ENCODE measurements at regions of chr4 and their contacts with region 1.

Region 1: GRCh38 chr4:41196633-41197332 is 17.6 kb downstream of the APBB2 start:
- DNase-seq: no peak
- ATAC-seq: no peak
- H3K4me3 ChIP-seq: no peak overlapping the region
- H3K27ac ChIP-seq: no peak overlapping the region
- H3K4me1 ChIP-seq: peaks cover 0 to 74% (median 12%) of the 10 kb centered on the region in 12 donors
- H3K27me3 ChIP-seq: no peaks in the 10 kb centered on the region
- CTCF ChIP-seq: no peak
- POLR2A ChIP-seq: no peak

Region 2: GRCh38 chr4:41143311-41144039 is 53.3 kb before region 1 on chr4:
- intact Hi-C with region 1: loop called in 2 of 10 experiments (anchors 5 to 10 kb)
- DNase-seq: peak in 4 of 5 donors; percentile 40 to 63 (median 56)
- ATAC-seq: peak; percentile 62 to 87 (median 82)
- H3K4me3 ChIP-seq: peak overlapping the region in 4 of 12 donors; percentile 8 to 32 (median 24)
- H3K27ac ChIP-seq: peak overlapping the region; percentile 56 to 89 (median 72)
- H3K4me1 ChIP-seq: peaks cover 0 to 65% (median 36%) of the 10 kb centered on the region in 12 donors
- H3K27me3 ChIP-seq: no peaks in the 10 kb centered on the region
- CTCF ChIP-seq: no peak
- POLR2A ChIP-seq: no peak

Region 3: DNA sequence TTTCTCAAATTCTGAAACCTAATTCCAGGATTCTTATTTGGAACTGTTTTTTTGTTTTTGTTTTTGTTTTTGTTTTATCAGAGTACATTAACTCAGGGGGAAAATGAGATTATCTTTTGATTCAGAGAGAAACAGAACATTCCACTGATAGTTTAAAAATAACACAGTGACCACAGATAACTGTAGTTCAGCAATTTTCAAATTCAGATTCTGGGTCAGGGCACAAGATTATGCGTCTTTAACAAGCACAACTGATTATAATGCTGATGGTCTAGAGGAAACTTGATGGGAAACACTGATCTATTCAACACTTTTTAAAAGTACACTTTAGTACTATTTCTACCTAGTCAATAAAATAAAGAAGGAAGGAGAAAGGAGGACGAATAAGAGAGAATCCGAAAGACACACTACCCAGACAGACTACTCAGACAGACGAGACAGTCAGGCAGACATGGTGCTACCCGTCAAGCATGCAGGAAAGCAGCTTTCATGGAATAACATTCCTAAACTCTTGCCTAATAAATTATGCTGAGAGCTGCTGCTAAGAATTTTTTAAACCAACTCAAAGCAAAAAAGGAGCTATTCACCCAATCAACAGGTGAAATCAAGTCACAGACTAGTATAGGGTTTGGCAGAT is 41.5 kb before region 1 on chr4:
- intact Hi-C with region 1: no loop called
- DNase-seq: peak in 1 of 5 donors; percentile 44
- ATAC-seq: peak; percentile 52 to 85 (median 63)
- H3K4me3 ChIP-seq: peak overlapping the region in 1 of 12 donors; percentile 14
- H3K27ac ChIP-seq: peak overlapping the region in 10 of 12 donors; percentile 9 to 54 (median 36)
- H3K4me1 ChIP-seq: peaks cover 0 to 49% (median 20%) of the 10 kb centered on the region in 12 donors
- H3K27me3 ChIP-seq: no peaks in the 10 kb centered on the region
- CTCF ChIP-seq: no peak
- POLR2A ChIP-seq: no peak

Region 4: DNA sequence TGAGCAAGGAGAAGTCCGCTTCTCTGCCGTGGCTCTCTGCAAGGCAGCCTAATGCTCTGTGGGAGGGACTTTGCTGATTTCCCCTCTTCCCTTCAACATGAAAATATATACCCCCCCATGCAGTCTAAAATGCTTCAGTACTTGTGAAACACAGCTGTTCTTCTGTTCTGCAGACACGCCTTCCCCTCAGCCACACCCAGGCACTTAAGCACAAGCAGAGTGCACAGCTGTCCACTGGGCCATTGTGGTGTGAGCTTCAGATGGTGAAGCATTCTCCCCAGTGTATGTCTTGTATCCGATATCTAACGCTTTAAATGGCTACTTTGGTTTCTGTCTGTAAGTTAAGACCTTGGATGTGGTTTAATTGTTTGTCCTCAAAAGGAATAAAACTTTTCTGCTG is 71.2 kb after region 1 on chr4:
- intact Hi-C with region 1: no loop called
- DNase-seq: peak in 1 of 5 donors; percentile 34
- ATAC-seq: peak in 1 of 4 donors; percentile 54
- H3K4me3 ChIP-seq: no peak overlapping the region
- H3K27ac ChIP-seq: no peak overlapping the region
- H3K4me1 ChIP-seq: no peaks in the 10 kb centered on the region
- H3K27me3 ChIP-seq: no peaks in the 10 kb centered on the region
- CTCF ChIP-seq: no peak
- POLR2A ChIP-seq: no peak